Dendritic cell treated with granulocyte-macrophage colony-stimulating factor and Interleukin-4, amounts not matched to agents 40 ng/mL and 50 ng/mL, for 4 days (primary cell): ENCODE measurements at regions of chr5 and their contacts with region 1.

Region 1: GRCh38 chr5:157312492-157312891 is 46.6 kb downstream of the CYFIP2 start:
- H3K4me3 Mint-ChIP-seq: no peak overlapping the region
- H3K27ac Mint-ChIP-seq: no peak overlapping the region
- H3K4me1 Mint-ChIP-seq: no peaks in the 10 kb centered on the region
- H3K27me3 Mint-ChIP-seq: no peaks in the 10 kb centered on the region

Region 2: DNA sequence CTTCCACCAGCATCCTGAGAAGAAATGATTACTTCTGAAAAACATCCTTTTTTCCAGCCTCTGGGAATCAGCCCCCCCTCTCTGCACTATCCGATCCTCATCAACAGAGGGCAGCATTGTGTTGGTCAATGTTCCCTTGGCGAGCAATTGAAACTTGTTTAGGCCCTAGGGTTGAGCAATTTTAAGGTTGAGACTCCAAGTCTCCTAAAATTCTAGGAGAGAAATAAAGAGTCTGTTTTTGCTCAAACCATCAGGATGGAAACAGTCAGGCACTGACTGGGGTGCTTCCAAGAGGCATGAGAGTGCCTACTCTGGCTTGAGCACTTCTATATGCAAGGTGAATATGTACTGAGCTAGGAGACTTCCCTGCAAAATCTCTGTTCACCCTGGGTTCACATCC is 58.9 kb before region 1 on chr5:
- intact Hi-C with region 1: loop called (anchors 1 kb)
- H3K4me3 Mint-ChIP-seq: no peak overlapping the region
- H3K27ac Mint-ChIP-seq: peak overlapping the region; percentile 61
- H3K4me1 Mint-ChIP-seq: peaks cover 27% of the 10 kb centered on the region
- H3K27me3 Mint-ChIP-seq: no peaks in the 10 kb centered on the region